ENCODE measurements at regions of chr1 and their contacts with region 1.

Region 1: DNA sequence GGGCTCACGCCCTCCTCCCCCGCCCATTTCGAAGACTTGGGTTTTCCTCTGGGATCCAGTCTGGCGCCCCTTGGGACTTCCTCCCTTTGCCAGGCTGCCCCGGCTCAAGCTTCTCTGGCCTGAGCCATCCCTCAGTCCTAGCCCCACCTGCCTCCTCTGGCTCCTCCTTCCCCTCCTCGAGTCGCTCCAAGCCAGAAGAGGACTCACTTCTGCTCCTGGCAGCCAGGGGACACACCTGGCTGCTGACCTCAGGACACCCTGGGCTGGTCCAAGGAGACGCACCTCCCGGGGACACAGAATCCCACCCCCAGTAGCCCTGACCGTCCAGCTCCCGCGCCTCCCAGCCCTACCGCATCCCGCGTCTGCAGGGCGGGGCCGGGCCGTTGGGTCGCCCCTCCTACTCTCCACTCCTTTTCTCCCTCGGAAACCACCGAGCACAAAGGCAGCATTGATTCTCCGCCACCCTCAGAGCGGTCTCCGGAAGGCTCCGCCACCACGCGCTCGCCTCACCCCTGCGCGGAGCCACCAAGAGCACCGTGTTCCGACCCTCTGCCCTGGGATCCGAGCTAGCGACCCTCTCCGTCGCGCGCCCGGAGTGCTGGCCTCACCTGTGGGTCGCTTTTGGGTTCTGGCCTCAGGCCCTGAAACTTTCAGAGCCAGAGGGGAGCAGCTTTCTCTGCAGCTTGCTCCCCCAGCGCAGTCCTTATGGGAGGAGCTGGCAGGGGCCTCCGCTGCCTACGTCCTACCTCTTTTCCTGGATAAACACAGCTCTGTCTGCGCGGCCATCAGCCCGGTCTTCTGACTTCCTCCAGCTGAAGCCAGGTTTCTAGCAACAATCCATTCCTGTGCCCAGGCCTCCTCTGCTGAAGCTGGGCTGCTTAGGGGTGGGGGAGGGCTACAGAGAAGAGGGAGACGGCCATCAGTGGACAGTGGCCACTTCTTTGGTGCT is at the start of gene C2CD4D:
- DNase-seq: peak; percentile 9
- ATAC-seq: peak; percentile 84
- H3K4me3 ChIP-seq: peak within 1 kb of the TSS; percentile 42; the same call in 1 of the 2 replicates
- H3K27ac ChIP-seq: peak within 1 kb of the TSS; percentile 26; the same call in 1 of the 2 replicates
- H3K4me1 ChIP-seq: peaks cover 10% of the 10 kb centered on the region; the same call in 1 of the 2 replicates
- H3K27me3 ChIP-seq: peaks cover 0 to 8% of the 10 kb centered on the region in 2 experiments
- CTCF ChIP-seq: no peak
- EP300 ChIP-seq: no peak
- POLR2A ChIP-seq: peak; percentile 66
- RAD21 ChIP-seq: no peak
- polyA plus RNA-seq, gene C2CD4D: 0.03 TPM in 1 of 2 experiments, not detected in the other

Region 2: GRCh38 chr1:151534665-151535278 is 305.0 kb before region 1 on chr1:
- CTCF ChIA-PET with region 1: interaction called, 4 read pairs
- POLR2A ChIA-PET with region 1: no interaction called
- RAD21 ChIA-PET with region 1: no interaction called
- SMC1A ChIA-PET with region 1: interaction called, 4 read pairs
- in situ Hi-C with region 1: no loop called
- intact Hi-C with region 1: loop called (anchors 2 kb)
- DNase-seq: no peak
- ATAC-seq: peak; percentile 91
- H3K4me3 ChIP-seq: no peak overlapping the region
- H3K27ac ChIP-seq: no peak overlapping the region
- H3K4me1 ChIP-seq: peaks cover 6% of the 10 kb centered on the region
- H3K27me3 ChIP-seq: no peaks in the 10 kb centered on the region
- CTCF ChIP-seq: peak; percentile 83 to 95 (median 92)
- EP300 ChIP-seq: no peak
- POLR2A ChIP-seq: no peak
- RAD21 ChIP-seq: peak; percentile 90

Region 3: DNA sequence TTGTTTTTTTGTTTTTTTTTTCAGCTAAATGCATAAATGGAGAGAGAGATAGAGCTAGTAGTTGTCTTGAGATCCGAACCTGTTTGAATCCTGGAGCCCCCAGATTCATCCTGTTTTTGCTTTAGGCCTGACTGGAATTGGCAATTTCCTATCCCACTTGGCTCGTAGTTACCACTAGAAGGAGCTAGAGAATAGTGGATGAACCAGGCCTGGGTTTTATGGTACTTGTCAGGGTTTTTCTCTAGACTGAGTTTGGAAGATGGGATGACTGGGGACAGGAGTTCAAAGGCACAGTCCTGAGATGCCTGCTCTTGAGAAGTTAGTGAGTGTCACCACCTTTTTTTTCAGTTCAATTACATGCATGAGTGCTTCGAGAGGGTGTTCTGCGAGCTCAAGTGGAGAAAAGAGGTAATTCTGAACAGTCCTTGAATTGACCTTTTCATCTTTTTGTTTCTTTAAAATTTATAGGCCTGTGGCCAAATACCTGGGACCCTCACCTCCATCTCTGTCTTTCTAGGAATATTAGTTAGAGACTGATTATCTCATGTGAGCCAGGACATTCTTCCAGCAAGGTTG is 146.6 kb before region 1 on chr1:
- CTCF ChIA-PET with region 1: interaction called, 4 read pairs
- POLR2A ChIA-PET with region 1: no interaction called
- RAD21 ChIA-PET with region 1: interaction called, 4 read pairs
- SMC1A ChIA-PET with region 1: interaction called, 3 read pairs
- in situ Hi-C with region 1: no loop called
- intact Hi-C with region 1: loop called (anchors 5 kb)
- DNase-seq: no peak
- ATAC-seq: no peak
- H3K4me3 ChIP-seq: no peak overlapping the region
- H3K27ac ChIP-seq: no peak overlapping the region
- H3K4me1 ChIP-seq: no peaks in the 10 kb centered on the region
- H3K27me3 ChIP-seq: no peaks in the 10 kb centered on the region
- CTCF ChIP-seq: peak; percentile 54 to 66 (median 61); a peak in 5 of 6 replicates
- EP300 ChIP-seq: no peak
- POLR2A ChIP-seq: no peak
- RAD21 ChIP-seq: peak; percentile 79

Region 4: GRCh38 chr1:151739590-151740375 is 99.9 kb before region 1 on chr1:
- CTCF ChIA-PET with region 1: interaction called, 15 read pairs
- POLR2A ChIA-PET with region 1: no interaction called
- RAD21 ChIA-PET with region 1: interaction called, 4 read pairs
- SMC1A ChIA-PET with region 1: interaction called, 4 read pairs
- in situ Hi-C with region 1: no loop called
- intact Hi-C with region 1: no loop called
- DNase-seq: no peak
- ATAC-seq: no peak
- H3K4me3 ChIP-seq: no peak overlapping the region
- H3K27ac ChIP-seq: no peak overlapping the region
- H3K4me1 ChIP-seq: no peaks in the 10 kb centered on the region
- H3K27me3 ChIP-seq: no peaks in the 10 kb centered on the region; a peak in 1 of 4 replicates
- CTCF ChIP-seq: no peak
- EP300 ChIP-seq: no peak
- POLR2A ChIP-seq: no peak
- RAD21 ChIP-seq: no peak

Region 5: DNA sequence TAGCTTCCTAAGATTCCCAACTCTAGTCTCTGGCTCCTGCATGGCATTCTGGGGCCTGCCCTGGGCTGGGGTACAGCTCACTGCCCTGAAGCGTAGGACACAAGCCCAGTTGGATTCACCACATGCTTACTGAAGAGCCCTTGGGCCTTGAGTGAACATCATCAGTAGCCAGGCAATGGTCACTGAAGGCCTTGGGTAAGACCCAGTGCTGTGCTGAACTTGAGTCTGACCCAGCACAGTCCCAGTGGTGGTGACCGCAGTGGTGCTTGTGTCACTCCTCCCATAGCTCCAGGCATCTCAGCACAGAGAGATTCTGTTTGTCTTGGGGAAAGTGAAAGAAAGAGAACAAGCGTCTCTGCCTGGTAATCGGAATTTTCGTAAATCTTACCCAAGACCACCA is 790.9 kb after region 1 on chr1:
- CTCF ChIA-PET with region 1: no interaction called
- POLR2A ChIA-PET with region 1: no interaction called
- RAD21 ChIA-PET with region 1: no interaction called
- SMC1A ChIA-PET with region 1: no interaction called
- in situ Hi-C with region 1: no loop called
- intact Hi-C with region 1: no loop called
- DNase-seq: no peak
- ATAC-seq: no peak
- H3K4me3 ChIP-seq: no peak overlapping the region
- H3K27ac ChIP-seq: no peak overlapping the region
- H3K4me1 ChIP-seq: no peaks in the 10 kb centered on the region
- H3K27me3 ChIP-seq: no peaks in the 10 kb centered on the region
- CTCF ChIP-seq: no peak
- EP300 ChIP-seq: no peak
- POLR2A ChIP-seq: no peak
- RAD21 ChIP-seq: no peak